ENCODE measurements at regions of chr17 and their contacts with region 1.

Region 1: DNA sequence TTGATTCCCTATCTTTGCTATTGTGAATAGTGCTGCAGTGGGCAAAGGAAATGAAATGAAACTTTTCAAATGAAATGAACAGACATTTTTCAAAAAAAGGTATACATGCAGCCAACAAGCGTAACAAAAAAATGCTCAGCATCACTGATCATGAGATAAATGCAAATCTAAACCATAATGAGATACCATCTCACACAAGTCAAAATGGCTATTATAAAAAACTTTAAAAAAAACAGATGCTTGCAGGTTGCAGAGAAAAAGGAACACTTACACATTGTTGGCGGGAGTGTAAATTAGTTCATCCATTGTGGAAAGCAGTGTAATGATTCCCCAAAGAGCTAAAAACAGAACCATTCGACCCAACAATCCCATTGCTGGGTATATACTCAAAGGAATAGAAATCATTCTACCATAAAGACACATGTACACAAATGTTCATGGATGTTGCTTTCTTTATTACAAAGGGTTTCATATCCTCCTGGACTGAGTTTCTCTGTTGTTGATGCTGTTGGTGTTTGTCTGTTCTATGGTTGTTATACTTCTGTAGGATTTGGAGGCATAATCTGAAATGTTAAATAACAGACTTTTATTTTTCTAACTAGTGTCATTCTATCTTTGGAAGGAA is 99.3 kb upstream of the SOX9 start:
- DNase-seq: no peak
- CTCF ChIP-seq: no peak

Region 2: DNA sequence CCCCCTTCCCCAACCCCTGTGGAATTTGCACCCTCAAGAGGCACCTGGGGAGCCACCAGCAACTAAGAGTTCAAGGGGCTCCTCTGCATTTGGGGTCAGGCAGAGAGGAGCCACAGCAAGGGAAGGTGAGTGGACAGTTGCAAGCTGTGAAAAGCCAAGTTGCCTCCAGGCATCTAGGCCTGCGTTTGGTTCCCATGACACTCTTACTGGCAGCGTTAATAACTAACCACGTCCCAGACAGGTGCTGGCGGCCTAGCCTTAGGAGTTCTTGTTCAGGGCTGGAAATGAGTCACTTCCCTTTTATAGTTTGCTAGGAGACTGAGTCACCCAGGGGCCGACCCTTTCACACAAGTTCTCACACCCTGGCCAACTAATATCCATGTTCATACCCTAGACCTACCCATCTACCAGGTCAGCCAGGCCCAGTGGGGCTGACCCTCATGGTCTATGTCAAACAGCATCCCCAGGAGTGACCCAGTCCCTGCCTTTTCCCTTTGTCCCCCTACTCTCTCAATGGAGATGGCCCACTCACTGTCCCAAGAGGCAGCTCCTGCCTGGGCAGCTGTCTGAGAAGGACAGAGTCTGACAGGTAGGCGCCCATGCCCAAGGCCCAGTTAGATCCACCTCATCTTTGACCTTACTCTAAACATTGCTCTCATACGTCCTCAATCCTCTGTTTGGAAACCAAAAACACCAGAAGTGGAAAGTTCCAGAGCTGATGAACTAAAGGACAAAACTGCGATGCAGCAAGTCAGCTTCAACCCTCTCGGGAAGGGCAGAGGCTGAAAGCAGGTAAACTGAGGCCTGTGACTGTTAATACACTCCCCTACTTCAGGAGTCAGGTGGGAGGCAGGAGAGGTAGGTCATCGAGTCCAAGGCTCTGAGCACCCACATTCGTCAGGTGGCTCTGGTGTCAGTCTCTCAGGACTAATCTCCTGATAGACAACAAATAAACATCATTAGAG is 399.9 kb after region 1 on chr17:
- in situ Hi-C with region 1: loop called (anchors 10 kb)
- DNase-seq: peak; percentile 78
- CTCF ChIP-seq: no peak

Measured in GM13976 (cell line).